Sigmoid colon (tissue), 7 donors: ENCODE measurements at regions of chr2 and their contacts with region 1.

Region 1: DNA sequence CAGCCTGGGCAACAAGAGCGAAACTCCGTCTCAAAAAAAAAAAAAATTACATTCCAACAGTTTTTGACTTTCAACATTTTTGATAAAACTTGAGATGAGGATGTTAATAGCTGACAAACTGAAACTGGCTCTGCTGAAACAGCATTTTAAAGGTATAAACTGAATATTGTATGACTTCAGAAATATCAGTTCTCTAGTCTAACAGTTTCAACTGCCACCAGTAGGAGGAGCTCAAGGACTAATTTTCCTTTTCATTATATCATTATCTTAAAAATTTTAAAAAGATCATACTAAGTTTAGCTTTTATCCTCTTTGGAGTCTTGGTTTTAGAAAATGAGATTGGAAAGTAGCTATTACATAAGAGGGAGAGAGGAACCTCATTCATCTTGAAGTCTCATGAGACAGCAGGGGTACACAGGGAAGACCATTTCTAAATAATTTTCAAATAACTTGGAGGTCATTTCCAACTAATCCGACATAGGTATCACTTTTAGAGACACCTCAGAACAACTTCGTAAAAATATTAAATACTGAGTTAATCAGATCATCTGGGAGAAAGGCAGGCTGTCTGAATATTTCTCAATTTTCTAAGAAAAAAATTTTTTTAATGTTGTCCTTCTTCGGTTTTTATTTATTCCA is 37.6 kb upstream of the MCM6 start:
- DNase-seq: no peak
- H3K4me3 ChIP-seq: no peak overlapping the region
- H3K27ac ChIP-seq: no peak overlapping the region
- H3K4me1 ChIP-seq: no peaks in the 10 kb centered on the region
- H3K27me3 ChIP-seq: no peaks in the 10 kb centered on the region
- CTCF ChIP-seq: peak; percentile 27 to 71 (median 61)
- EP300 ChIP-seq: no peak
- POLR2A ChIP-seq: no peak

Region 2: DNA sequence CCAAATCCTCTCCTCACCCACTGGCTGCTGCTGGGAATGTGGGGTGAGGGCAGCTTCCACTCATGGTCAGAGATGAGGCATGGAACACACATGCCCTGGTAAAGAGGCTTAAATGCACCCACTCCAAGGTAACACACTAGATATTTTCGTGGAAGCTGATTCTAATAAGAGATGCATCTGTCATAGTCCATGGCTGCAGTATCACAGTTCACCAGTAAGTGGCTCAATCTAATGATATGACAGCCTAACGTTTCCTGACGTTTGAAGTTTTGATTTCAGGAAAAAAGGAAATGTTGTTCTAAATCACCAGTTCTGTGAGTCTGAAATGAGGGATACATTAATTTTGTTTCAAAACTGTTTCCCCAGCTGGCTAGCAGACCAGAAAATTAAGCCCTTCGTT is 115.1 kb before region 1 on chr2:
- intact Hi-C with region 1: no loop called
- DNase-seq: no peak
- H3K4me3 ChIP-seq: no peak overlapping the region
- H3K27ac ChIP-seq: no peak overlapping the region
- H3K4me1 ChIP-seq: no peaks in the 10 kb centered on the region
- H3K27me3 ChIP-seq: no peaks in the 10 kb centered on the region
- CTCF ChIP-seq: no peak
- EP300 ChIP-seq: no peak
- POLR2A ChIP-seq: no peak

Region 3: DNA sequence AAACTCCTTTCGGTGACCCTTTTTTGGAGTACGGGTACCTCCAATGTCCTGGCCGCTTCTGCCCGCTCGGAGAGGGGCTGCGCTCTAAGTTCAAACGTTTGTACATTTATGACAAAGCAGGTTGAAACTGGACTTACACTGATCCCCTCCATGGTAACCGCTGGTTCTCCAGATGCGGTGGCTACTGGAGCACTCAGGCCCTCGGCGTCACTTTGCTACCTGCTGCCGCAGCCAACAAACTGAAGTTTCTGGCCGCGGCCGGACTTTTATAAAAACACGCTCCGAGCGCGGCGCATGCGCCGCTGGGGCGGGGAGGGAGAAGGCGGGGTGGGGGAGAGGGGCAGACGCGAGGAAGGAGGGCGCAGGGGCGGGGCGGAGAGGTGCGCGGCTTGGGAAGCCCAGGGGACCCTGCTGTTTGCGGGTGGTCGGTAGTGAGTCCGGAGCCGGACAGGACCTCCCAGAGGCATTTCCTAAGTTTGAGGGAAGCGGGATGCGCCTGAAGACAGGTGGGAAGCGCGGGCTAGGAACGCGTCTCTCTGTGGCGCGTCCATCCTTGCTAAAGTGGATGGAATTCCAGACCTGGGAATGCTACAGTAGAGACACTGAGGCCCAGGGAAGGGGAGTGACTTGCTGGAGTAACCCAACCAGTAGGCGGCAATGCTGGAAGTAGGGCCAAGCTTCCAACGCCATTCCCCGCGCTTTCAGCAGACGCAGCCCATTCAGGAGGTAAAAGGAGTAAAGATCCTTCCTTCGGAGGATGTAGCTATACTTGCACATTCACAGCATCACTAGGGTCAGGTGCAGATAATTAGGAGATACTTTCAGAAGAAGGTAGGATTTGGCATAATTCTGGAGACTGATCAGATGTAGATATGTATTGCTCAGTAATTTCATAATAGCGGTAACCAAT is 204.3 kb after region 1 on chr2 and contains the start of gene CXCR4:
- intact Hi-C with region 1: loop called (anchors 5 kb)
- DNase-seq: peak; percentile 77
- H3K4me3 ChIP-seq: peak within 1 kb of the TSS; percentile 20 to 53 (median 42)
- H3K27ac ChIP-seq: peak within 1 kb of the TSS in 2 of 4 donors; percentile 60 to 67
- H3K4me1 ChIP-seq: peaks cover 0 to 39% (median 35%) of the 10 kb centered on the region in 4 donors
- H3K27me3 ChIP-seq: peaks cover 19 to 84% (median 53%) of the 10 kb centered on the region in 3 donors
- CTCF ChIP-seq: no peak
- EP300 ChIP-seq: no peak
- POLR2A ChIP-seq: no peak
- total RNA-seq, gene CXCR4: 5.0 to 13.6 (median 6.3) TPM

Region 4: GRCh38 chr2:136378712-136379595 is 465.1 kb after region 1 on chr2:
- intact Hi-C with region 1: loop called (anchors 2 kb)
- DNase-seq: no peak
- H3K4me3 ChIP-seq: no peak overlapping the region
- H3K27ac ChIP-seq: no peak overlapping the region
- H3K4me1 ChIP-seq: no peaks in the 10 kb centered on the region
- H3K27me3 ChIP-seq: no peaks in the 10 kb centered on the region
- CTCF ChIP-seq: peak; percentile 18 to 60 (median 40)
- EP300 ChIP-seq: no peak
- POLR2A ChIP-seq: no peak